T-cell (primary cell): ENCODE measurements at regions of chr10 and their contacts with region 1.

Region 1: GRCh38 chr10:117320050-117320665 is 55.1 kb downstream of the PDZD8 start:
- DNase-seq: peak in 1 of 35 experiments; percentile 42
- ATAC-seq: no peak
- H3K4me3 ChIP-seq: no peak overlapping the region
- H3K4me3 Mint-ChIP-seq: no peak overlapping the region
- H3K27ac ChIP-seq: no peak overlapping the region
- H3K27ac Mint-ChIP-seq: no peak overlapping the region
- H3K4me1 ChIP-seq: no peaks in the 10 kb centered on the region
- H3K4me1 Mint-ChIP-seq: peaks cover 5 to 10% (median 7%) of the 10 kb centered on the region in 3 donors
- H3K27me3 ChIP-seq: no peaks in the 10 kb centered on the region
- H3K27me3 Mint-ChIP-seq: no peaks in the 10 kb centered on the region

Region 2: DNA sequence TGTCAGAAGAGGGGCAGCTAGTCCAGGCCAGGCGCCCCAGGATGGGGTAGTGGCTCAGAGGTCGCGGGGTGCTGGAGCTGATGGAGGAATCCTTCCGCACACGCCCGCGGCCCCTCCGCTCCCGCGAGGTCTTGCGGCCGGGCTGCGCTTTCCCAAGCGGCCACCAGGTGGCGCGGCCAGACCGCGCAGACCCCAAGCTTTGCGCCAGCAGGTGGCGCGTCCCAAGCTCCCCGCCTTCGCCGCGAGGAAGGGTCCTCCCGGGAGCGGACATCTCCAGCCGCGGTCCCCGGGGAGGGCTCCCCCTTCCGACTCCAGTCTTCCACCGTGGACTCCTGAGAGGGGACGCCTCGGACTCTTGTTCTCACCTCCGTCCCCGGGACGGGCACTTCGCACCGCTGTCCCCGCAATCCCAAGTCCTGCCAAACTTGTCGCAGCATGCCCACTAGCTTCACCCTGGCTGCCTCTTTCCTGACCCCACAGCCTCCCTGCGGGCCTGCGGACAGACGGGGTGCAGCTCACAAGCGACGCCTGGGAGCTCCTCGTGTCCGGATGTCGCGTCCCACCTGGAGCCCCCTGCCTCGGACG is 103.5 kb before region 1 on chr10:
- CTCF ChIA-PET with region 1: interaction called, 32 to 45 read pairs
- POLR2A ChIA-PET with region 1: no interaction called
- DNase-seq: peak; percentile 8 to 84 (median 55)
- ATAC-seq: peak; percentile 75 to 90 (median 84)
- H3K4me3 ChIP-seq: peak overlapping the region; percentile 61 to 80
- H3K4me3 Mint-ChIP-seq: peak overlapping the region; percentile 68 to 79 (median 72)
- H3K27ac ChIP-seq: no peak overlapping the region
- H3K27ac Mint-ChIP-seq: no peak overlapping the region
- H3K4me1 ChIP-seq: peaks cover 2 to 16% of the 10 kb centered on the region in 2 experiments
- H3K4me1 Mint-ChIP-seq: peaks cover 6 to 11% (median 9%) of the 10 kb centered on the region in 3 donors
- H3K27me3 ChIP-seq: peaks cover 2 to 45% of the 10 kb centered on the region in 2 experiments
- H3K27me3 Mint-ChIP-seq: peaks cover 21 to 33% of the 10 kb centered on the region in 2 donors

Region 3: DNA sequence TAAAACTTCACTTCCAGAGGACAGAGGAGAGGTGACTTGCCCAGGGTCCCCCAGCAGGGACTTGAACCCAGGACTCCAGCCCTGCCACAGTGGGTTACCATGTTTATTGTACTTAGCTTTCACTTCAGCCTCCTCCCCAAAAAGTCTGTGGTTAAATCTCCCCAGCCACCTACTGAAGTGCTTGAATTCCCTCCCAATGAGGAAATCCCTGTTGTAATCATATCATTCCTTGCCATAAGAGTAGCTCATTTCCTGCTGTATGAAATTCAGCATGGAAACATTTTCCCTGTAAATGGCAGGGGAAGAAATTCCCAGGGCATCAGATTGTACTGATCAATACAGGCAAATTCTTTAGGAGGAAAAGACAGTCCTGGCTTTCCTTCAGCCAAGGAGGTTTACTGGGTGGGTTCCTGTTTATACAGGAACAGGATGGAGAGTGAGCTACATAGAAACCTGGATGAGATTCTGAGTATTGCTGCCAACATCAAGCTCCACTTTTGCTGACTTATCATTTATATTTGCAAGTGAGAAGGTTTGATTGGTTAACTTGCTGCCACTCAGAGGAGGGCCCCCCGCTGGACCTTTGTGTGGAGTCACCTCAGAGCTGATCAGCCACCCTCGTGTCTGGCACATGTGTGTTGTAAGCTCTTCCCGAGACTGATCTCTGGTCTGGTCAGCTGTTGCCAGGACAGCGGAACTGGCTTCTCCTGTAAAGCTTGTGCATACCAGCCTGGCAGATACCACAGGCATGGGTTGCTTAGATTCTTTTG is 71.5 kb after region 1 on chr10:
- CTCF ChIA-PET with region 1: interaction called, 3 to 13 read pairs
- POLR2A ChIA-PET with region 1: no interaction called
- DNase-seq: no peak
- ATAC-seq: no peak
- H3K4me3 ChIP-seq: no peak overlapping the region
- H3K4me3 Mint-ChIP-seq: no peak overlapping the region
- H3K27ac ChIP-seq: no peak overlapping the region
- H3K27ac Mint-ChIP-seq: no peak overlapping the region
- H3K4me1 ChIP-seq: no peaks in the 10 kb centered on the region
- H3K4me1 Mint-ChIP-seq: no peaks in the 10 kb centered on the region
- H3K27me3 ChIP-seq: peaks cover 0 to 5% of the 10 kb centered on the region in 2 experiments
- H3K27me3 Mint-ChIP-seq: peaks cover 49 to 61% of the 10 kb centered on the region in 2 donors